ENCODE measurements at regions of chr21 and their contacts with region 1.

Region 1: DNA sequence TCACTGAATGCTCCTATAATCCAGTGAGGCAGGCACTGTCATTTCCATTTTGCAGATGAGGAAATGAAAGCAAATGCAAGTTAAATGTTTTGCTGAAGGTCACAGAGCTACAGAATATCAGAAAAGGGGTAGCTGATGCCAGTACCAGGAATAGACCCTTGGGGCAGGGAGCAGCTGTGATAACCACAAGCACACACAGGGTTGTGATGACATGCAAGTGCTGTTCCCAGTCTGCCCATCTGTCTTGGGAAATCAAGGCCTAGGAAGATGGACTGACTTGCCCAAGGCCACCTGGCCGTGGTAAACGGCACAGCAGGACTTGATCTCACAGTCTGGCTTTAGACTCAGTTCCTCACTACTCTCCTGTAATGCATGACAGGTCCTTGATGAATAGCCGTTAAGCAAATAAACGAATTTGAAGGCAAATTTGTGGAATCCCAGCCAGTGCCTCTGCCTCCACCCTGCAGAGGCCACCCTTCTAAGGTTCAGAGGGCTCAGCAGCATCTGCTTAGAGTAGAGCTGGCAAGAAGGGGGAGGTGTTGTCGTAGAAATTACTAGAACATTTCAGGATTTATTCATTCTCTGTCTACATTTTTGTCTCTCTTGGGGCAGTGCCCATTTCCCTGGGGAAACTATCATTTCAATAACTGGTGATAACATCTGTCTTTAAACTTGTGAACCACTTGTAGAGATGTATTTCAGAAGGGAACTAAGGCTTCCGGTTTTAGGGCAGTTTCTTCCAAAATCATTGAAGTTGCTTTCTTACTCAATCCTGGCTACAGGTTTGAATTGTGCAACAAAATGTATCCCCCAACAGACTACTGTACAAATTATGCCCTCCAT is 53.2 kb upstream of the MRPS6 start:
- DNase-seq: peak; percentile 27
- H3K4me3 ChIP-seq: no peak overlapping the region
- H3K27ac ChIP-seq: no peak overlapping the region
- H3K4me1 ChIP-seq: peaks cover 17% of the 10 kb centered on the region
- H3K27me3 ChIP-seq: no peaks in the 10 kb centered on the region
- CTCF ChIP-seq: no peak

Region 2: DNA sequence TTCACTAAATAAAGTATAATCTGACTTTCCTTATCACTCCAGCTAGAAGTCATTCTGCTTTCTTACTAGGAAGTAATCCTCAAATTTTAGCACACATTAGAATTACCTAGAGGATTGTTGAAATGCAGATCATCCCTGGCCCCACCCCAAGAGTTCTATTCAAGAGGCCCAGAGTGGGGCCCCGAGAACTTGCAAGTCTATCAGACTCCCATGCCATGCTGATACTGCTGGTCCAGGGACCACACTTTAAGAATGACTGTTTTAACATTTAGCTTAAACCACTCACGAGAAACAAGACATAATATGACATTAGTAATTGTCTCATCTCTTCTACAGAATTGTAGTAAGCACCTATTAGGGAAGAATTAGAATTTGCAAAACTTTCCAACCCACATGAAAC is 1284.7 kb before region 1 on chr21:
- CTCF ChIA-PET with region 1: no interaction called
- POLR2A ChIA-PET with region 1: no interaction called
- intact Hi-C with region 1: no loop called
- DNase-seq: no peak
- H3K4me3 ChIP-seq: no peak overlapping the region
- H3K27ac ChIP-seq: no peak overlapping the region
- H3K4me1 ChIP-seq: no peaks in the 10 kb centered on the region
- H3K27me3 ChIP-seq: no peaks in the 10 kb centered on the region
- CTCF ChIP-seq: no peak

Region 3: GRCh38 chr21:34202553-34203372 is 182.5 kb after region 1 on chr21:
- CTCF ChIA-PET with region 1: no interaction called
- POLR2A ChIA-PET with region 1: interaction called, 11 read pairs
- intact Hi-C with region 1: no loop called
- DNase-seq: no peak
- H3K4me3 ChIP-seq: no peak overlapping the region
- H3K27ac ChIP-seq: no peak overlapping the region
- H3K4me1 ChIP-seq: peaks cover 37% of the 10 kb centered on the region
- H3K27me3 ChIP-seq: no peaks in the 10 kb centered on the region
- CTCF ChIP-seq: no peak

Region 4: GRCh38 chr21:34313116-34313515 is 292.9 kb after region 1 on chr21:
- CTCF ChIA-PET with region 1: no interaction called
- POLR2A ChIA-PET with region 1: interaction called, 12 read pairs
- intact Hi-C with region 1: no loop called
- DNase-seq: no peak
- H3K4me3 ChIP-seq: no peak overlapping the region
- H3K27ac ChIP-seq: no peak overlapping the region
- H3K4me1 ChIP-seq: no peaks in the 10 kb centered on the region
- H3K27me3 ChIP-seq: peaks cover 26% of the 10 kb centered on the region
- CTCF ChIP-seq: no peak

Measured in A673 (cell line).